KBM-7 (cell line): ENCODE measurements at regions of chr2 and their contacts with region 1.

Region 1: DNA sequence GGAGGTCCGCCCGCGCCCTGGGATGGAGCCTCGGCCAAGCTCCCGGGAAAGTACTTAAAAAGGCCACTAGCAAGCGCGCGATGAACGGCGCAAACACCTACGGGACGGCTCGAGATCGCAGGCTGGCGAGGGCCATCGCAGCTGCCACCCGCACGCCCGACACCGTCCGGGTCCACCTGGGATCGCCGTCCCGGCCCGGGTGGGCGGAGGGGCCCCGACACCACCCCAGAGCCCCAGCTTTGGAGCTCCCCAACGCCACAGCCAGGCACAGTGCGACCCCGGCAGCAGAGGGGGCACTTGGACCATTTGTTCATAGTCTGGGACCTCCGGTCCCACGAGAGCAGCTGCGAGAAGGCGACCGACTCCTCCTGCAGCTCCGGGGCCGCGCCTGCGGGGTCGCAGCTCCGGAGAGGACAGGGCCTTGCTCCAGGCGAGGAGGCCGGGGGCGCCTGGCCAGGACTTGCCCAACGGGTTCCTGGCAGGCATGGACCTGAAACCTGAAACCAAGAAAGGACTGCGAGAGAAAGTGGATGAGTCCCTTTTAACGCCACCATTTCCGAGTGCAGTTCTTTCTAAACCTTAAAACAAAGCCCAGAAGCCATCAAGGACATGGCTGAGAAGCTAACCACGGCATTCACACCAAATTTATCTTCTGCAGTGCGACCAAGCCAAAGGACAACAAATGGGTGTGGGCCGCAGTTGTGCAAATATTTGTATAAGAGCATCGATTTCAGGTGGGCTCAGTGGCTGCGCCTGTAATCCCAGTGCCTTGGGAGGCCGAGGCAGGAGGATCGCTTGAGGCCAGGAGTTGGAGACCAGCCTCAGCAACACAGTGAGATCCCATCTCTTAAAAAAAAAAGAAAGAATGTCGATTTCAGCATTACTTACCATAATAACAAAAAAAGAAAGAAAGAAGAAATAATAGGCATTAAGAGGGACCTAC is 54.0 kb upstream of the IMP4 start:
- DNase-seq: no peak

Region 2: DNA sequence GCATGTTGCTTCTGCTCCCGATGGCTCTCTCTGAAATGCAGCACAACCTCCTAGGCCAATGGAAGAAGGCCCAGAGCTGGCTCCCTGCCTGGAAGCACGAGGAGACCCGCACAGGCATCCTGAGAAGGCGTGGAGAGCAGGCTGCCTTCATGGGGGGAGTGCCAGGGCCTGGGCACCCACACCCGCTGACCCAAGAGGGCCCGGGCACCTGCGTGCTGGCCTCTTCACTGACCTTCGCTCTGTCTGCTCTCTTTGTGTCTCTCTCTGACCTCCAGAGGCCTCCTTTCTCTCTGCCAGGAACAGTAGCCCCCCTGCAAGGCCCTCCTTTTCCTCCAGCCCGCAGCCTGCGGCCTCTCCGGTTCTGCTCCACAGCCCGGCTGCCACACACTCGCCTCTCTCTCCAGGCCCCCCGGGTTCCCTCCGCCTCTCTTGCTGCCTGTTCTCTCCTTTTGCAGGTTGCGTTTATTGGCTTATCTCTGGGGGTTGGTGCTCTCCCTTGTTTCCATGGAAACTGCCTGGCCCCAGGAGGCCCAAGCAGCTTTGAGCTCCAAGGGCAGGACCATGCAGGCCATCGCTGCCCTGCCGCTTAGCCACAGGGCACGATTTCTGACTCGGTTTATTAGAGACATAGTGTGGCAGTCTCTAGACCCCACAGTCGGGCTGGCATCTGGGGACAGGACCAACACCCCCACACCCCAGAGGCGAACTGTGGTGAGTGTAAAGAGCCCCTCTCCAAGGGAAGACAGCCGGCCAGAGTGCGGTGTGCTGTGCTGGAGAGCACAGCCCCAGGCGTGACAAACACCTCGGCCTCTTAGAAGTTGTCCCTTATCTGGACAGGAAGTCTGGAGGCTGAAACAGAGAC is 105.0 kb before region 1 on chr2:
- in situ Hi-C with region 1: no loop called
- DNase-seq: no peak

Region 3: GRCh38 chr2:131366643-131367042 is 1077.9 kb after region 1 on chr2:
- in situ Hi-C with region 1: loop called (anchors 25 kb)
- DNase-seq: no peak